Activated naive CD4-positive, alpha-beta T cell treated with anti-CD3 and anti-CD28 coated beads, Interleukin-2, amount 10 ng/mL, durations not matched to agents 7 days and 5 days (primary cell): ENCODE measurements at regions of chr2 and their contacts with region 1.

Region 1: DNA sequence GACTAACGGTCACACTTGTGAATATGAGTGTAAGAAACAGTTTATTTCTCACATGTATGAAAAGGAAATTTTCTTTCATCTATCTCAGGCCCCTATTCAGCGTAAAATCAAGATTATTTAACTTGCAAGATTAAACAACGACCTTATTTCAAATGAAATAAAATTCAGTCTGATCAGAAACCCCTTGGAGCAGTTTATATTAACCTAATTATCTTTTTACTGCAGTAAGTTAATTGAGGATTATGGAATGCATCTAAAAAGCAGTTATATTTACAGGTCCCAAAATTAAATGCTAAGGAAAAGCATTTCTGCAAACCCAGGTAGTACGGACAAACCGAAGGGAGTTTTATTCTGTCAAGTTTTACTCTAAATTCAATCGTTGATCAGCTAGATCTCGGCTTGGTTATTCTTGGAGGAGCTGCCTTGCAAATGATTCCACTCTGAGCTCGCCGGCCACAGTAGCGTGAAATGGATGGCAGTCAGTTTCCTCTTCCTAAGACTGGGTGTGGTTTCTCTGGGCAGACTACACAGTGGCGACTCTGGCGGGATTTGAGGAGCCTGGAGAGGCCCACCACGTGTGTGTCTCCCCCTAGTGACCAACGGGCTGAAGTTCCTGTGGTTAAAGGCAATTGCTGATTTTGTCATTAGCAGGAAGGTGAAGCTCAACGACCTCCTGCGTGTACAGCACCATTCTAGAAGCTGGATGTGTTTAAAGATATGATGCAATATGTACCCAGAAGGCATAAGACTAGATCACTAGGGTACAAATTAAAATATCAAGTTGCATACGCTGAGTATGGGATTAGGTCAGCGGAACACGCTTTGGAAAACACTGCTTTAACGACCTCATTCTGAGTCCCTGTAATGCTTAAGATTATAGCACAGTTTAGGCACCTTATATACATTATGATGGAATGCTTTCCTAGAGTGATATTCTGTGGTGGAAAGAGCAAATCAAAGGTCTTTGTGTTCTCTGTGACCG is 36.4 kb downstream of the PRKRA start:
- DNase-seq: peak; percentile 87
- H3K4me3 Mint-ChIP-seq: peak overlapping the region; percentile 83
- H3K27ac Mint-ChIP-seq: peak overlapping the region; percentile 83
- H3K4me1 Mint-ChIP-seq: peaks cover 30% of the 10 kb centered on the region
- H3K27me3 Mint-ChIP-seq: no peaks in the 10 kb centered on the region

Region 2: GRCh38 chr2:178112202-178113152 is 302.1 kb before region 1 on chr2 and contains the start of gene RBM45:
- CTCF ChIA-PET with region 1: interaction called, 18 read pairs
- DNase-seq: peak; percentile 89
- H3K4me3 Mint-ChIP-seq: peak within 1 kb of the TSS; percentile 85
- H3K27ac Mint-ChIP-seq: peak within 1 kb of the TSS; percentile 89
- H3K4me1 Mint-ChIP-seq: peaks cover 34% of the 10 kb centered on the region
- H3K27me3 Mint-ChIP-seq: no peaks in the 10 kb centered on the region

Region 3: DNA sequence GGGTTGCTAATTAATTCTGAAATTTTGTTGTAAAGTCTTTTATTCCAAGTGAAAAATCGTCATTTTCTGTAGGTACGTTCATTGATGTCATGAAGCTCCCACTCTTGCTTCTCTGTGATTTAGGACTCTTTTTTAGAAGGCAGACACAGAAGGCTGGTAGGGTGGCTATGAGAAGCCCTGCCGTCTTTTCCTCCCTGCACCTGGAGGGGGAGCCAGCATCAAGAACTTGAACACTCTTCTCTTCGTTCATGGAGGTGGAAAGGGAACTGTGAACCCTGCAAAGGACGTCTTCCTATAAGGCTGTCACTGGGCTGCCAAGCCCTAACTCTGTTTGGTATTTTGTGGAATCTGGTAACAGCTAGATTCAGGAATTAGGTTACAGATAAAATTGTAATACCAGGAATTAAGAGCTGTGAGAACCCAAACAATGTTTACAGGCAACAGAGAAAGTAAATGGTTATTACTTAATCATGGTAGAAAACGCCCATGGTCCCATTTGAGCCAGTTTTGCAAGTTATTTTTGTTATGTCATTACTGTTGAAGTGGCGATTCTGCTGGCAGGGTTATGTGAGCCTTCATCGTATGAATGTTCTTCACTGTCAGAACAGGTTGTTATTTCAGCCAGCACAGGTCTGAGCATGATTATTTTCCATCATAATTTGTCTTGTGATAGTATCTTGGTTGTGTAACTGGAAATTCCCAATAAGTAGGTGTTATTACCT is 108.0 kb before region 1 on chr2:
- CTCF ChIA-PET with region 1: interaction called, 15 read pairs
- DNase-seq: peak; percentile 53
- H3K4me3 Mint-ChIP-seq: no peak overlapping the region
- H3K27ac Mint-ChIP-seq: no peak overlapping the region
- H3K4me1 Mint-ChIP-seq: no peaks in the 10 kb centered on the region
- H3K27me3 Mint-ChIP-seq: peaks cover 12% of the 10 kb centered on the region

Region 4: GRCh38 chr2:178397002-178397605 is 17.5 kb before region 1 on chr2:
- CTCF ChIA-PET with region 1: interaction called, 157 read pairs
- DNase-seq: no peak
- H3K4me3 Mint-ChIP-seq: no peak overlapping the region
- H3K27ac Mint-ChIP-seq: no peak overlapping the region
- H3K4me1 Mint-ChIP-seq: no peaks in the 10 kb centered on the region
- H3K27me3 Mint-ChIP-seq: peaks cover 9% of the 10 kb centered on the region

Region 5: DNA sequence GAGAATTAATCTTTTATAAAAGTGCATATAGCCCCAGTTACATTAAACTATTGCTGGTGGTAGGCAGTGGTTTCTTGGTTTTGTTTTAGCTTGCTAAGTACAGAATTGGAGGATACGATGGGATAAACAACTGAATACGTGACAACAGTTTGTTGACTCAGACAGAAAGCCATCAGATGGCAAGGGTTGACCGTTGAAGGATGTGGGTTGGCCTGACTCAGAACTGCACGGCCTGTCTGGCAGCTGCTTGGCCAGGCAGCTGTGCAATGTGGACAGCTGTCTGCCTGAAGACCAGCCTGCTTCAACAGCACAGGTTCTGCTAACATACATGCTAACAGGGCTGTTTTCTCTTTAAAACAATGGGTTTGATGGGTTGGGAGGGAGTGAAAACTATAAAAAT is 10.2 kb before region 1 on chr2:
- CTCF ChIA-PET with region 1: interaction called, 157 read pairs
- DNase-seq: peak; percentile 28
- H3K4me3 Mint-ChIP-seq: no peak overlapping the region
- H3K27ac Mint-ChIP-seq: no peak overlapping the region
- H3K4me1 Mint-ChIP-seq: peaks cover 14% of the 10 kb centered on the region
- H3K27me3 Mint-ChIP-seq: no peaks in the 10 kb centered on the region